ENCODE measurements at regions of chr5 and their contacts with region 1.

Region 1: GRCh38 chr5:39570403-39571027 is 145.7 kb upstream of the DAB2 start:
- DNase-seq: no peak
- H3K4me3 ChIP-seq: no peak overlapping the region
- H3K27ac ChIP-seq: no peak overlapping the region
- H3K4me1 ChIP-seq: no peaks in the 10 kb centered on the region
- H3K27me3 ChIP-seq: no peaks in the 10 kb centered on the region
- CTCF ChIP-seq: peak; percentile 68

Region 2: GRCh38 chr5:39217365-39218281 is 352.9 kb before region 1 on chr5:
- intact Hi-C with region 1: loop called (anchors 5 kb)
- DNase-seq: peak; percentile 78
- H3K4me3 ChIP-seq: peak overlapping the region; percentile 9
- H3K27ac ChIP-seq: peak overlapping the region; percentile 27
- H3K4me1 ChIP-seq: no peaks in the 10 kb centered on the region
- H3K27me3 ChIP-seq: no peaks in the 10 kb centered on the region
- CTCF ChIP-seq: peak; percentile 97

Region 3: DNA sequence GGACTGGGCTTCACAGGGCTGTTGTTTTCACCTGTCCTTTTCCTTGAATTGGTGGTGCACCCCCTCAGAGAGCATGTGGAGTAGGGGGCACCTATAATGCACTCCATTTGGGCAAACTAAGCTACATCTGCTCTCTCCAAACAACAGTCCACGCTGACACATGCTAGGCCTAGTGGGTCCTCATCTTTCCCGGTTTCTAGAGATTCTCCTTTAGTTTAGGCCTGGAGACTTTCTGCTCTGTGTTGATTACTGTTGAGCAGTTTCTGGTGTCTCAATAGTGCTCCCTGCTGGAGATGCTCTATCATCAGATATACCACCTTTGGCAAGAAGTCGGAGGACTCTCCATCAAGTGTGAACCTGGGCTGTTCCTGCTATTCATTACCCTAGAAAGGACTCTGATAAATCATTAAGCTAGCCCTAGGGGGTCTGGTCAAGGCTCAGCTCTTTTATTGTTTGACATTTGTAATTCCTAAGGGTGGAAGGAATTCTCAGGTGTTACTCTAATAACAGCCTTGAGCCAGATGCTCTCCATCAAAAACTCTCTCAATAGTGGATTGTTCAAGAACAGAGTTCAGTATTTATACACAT is 287.2 kb before region 1 on chr5:
- intact Hi-C with region 1: loop called (anchors 10 kb)
- DNase-seq: peak; percentile 63
- H3K4me3 ChIP-seq: no peak overlapping the region
- H3K27ac ChIP-seq: no peak overlapping the region
- H3K4me1 ChIP-seq: no peaks in the 10 kb centered on the region
- H3K27me3 ChIP-seq: no peaks in the 10 kb centered on the region
- CTCF ChIP-seq: peak; percentile 65

Region 4: DNA sequence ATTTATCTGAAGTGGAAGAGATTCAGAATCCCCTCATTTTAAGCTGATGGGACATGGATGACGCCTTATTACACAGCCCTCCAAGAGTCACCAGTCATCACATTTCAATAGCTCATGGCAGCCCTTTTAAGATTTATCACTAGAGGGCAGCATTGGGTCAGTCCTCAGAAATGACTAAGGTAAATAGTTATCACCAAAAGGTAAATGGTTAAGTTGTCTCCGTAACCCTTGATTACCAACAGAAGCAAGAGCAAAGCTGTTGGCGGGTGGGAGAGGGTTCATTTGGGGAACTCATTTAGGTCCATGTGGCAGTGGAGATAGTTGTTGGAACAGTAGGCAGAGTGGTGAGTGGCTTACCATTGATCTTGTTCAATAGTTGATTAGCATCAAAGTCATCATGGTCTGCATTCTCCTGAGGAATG is 194.2 kb before region 1 on chr5:
- intact Hi-C with region 1: loop called (anchors 5 kb)
- DNase-seq: peak; percentile 65
- H3K4me3 ChIP-seq: no peak overlapping the region
- H3K27ac ChIP-seq: no peak overlapping the region
- H3K4me1 ChIP-seq: no peaks in the 10 kb centered on the region
- H3K27me3 ChIP-seq: no peaks in the 10 kb centered on the region
- CTCF ChIP-seq: peak; percentile 74

Region 5: DNA sequence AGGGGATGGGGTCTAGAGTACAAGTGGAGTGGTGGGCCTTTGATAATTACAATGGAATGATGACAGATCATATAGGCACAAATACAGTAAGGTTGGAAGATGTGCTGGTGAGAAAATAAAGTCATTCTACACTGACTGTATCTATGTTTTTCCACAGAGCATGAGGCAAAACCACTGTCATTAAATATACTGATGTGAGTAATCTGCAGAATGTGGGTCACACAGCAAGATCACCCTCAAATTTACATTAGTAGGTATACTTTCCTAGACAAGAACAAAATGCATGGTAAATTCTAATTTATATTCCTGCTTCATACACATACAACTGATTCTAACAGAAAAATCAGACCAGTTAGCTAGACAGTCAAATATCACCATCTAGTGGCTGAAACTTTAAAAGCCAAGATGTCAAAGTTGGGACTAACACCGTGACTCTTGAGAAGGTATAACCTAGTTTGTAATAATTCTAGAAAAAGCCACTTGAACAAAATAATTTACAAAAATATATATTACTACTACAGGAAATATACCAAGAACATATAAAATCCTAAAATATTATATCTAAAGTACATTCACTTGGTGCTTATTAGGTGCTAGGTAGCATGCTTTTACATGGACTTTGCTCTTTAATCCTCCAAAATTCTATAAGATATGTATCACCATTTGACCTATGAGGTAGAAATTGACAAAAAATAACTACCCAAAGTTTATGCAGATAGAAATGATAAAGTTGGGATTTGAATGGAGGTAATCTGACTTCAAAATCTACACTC is 1165.8 kb after region 1 on chr5:
- intact Hi-C with region 1: loop called (anchors 10 kb)
- DNase-seq: no peak
- H3K4me3 ChIP-seq: no peak overlapping the region
- H3K27ac ChIP-seq: no peak overlapping the region
- H3K4me1 ChIP-seq: peaks cover 11% of the 10 kb centered on the region
- H3K27me3 ChIP-seq: no peaks in the 10 kb centered on the region
- CTCF ChIP-seq: peak; percentile 70

Region 6: GRCh38 chr5:40879163-40879942 is 1308.8 kb after region 1 on chr5:
- intact Hi-C with region 1: loop called (anchors 10 kb)
- DNase-seq: no peak
- H3K4me3 ChIP-seq: no peak overlapping the region
- H3K27ac ChIP-seq: no peak overlapping the region
- H3K4me1 ChIP-seq: no peaks in the 10 kb centered on the region
- H3K27me3 ChIP-seq: no peaks in the 10 kb centered on the region
- CTCF ChIP-seq: peak; percentile 39

Measured in colonic mucosa (tissue), 4 donors.